ENCODE measurements at regions of chr15 and their contacts with region 1.

Region 1: DNA sequence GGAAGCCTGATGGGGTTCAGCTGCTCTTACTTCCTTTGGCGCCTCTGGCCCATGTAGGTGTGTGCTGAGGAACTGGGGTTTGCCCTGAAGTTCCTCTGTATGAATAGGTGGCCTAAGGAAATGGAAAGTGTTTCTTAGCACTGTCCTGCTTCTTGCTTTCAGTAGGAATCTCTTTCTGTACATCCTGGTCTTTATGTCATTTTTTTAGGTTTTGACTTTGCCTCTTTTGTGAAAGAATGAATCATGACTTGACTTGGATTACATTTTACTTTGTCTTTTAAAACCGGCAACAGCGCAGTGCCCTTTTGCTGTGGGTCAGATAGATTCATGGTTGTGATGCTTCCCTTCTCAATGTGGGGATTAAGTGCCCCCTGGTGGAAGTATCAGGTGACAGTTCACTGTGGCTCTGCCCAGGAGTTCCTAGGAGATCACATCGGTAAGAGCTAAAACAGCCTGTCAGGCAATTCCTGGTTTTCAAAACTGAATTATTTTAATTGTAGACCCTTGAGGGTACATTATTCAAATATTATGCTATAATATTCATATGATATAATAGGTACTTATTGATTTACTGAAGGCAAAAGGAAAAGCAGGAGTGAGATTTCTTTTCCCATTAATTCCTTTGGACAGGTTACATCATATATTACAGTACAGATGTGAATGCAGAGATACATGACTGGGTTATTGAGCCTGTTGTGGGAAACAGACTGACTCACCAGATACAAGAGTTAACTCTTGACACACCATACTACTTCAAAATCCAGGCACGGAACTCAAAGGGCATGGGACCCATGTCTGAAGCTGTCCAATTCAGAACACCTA is 95.4 kb downstream of the HCN4 start:
- DNase-seq: peak; percentile 67
- ATAC-seq: peak; percentile 95
- H3K4me3 ChIP-seq: no peak overlapping the region
- H3K27ac ChIP-seq: no peak overlapping the region
- H3K4me1 ChIP-seq: peaks cover 7% of the 10 kb centered on the region
- H3K27me3 ChIP-seq: no peaks in the 10 kb centered on the region
- CTCF ChIP-seq: peak; percentile 83
- POLR2A ChIP-seq: no peak
- RAD21 ChIP-seq: peak; percentile 76

Region 2: GRCh38 chr15:72722071-72722696 is 551.2 kb before region 1 on chr15:
- CTCF ChIA-PET with region 1: no interaction called
- POLR2A ChIA-PET with region 1: no interaction called
- dilution Hi-C with region 1: no loop called
- in situ Hi-C with region 1: no loop called
- intact Hi-C with region 1: loop called (anchors 1 kb)
- DNase-seq: peak; percentile 80
- ATAC-seq: peak; percentile 87
- H3K4me3 ChIP-seq: no peak overlapping the region
- H3K27ac ChIP-seq: no peak overlapping the region
- H3K4me1 ChIP-seq: no peaks in the 10 kb centered on the region
- H3K27me3 ChIP-seq: no peaks in the 10 kb centered on the region
- CTCF ChIP-seq: peak; percentile 87
- POLR2A ChIP-seq: no peak
- RAD21 ChIP-seq: peak; percentile 78

Region 3: GRCh38 chr15:72796515-72797337 is 476.7 kb before region 1 on chr15:
- CTCF ChIA-PET with region 1: interaction called, 6 read pairs
- POLR2A ChIA-PET with region 1: no interaction called
- dilution Hi-C with region 1: no loop called
- in situ Hi-C with region 1: no loop called
- intact Hi-C with region 1: loop called (anchors 1 kb)
- DNase-seq: peak; percentile 16
- ATAC-seq: peak; percentile 91
- H3K4me3 ChIP-seq: peak overlapping the region; percentile 53
- H3K27ac ChIP-seq: no peak overlapping the region; the same call in 1 of the 2 replicates
- H3K4me1 ChIP-seq: peaks cover 12% of the 10 kb centered on the region
- H3K27me3 ChIP-seq: no peaks in the 10 kb centered on the region; the same call in 1 of the 2 replicates
- CTCF ChIP-seq: peak; percentile 73
- POLR2A ChIP-seq: no peak
- RAD21 ChIP-seq: peak; percentile 84

Region 4: GRCh38 chr15:73127301-73127936 is 146.0 kb before region 1 on chr15:
- CTCF ChIA-PET with region 1: no interaction called
- POLR2A ChIA-PET with region 1: no interaction called
- dilution Hi-C with region 1: no loop called
- in situ Hi-C with region 1: loop called (anchors 10 kb)
- intact Hi-C with region 1: loop called (anchors 5 kb)
- DNase-seq: peak; percentile 30
- ATAC-seq: peak; percentile 89
- H3K4me3 ChIP-seq: no peak overlapping the region
- H3K27ac ChIP-seq: no peak overlapping the region
- H3K4me1 ChIP-seq: no peaks in the 10 kb centered on the region
- H3K27me3 ChIP-seq: no peaks in the 10 kb centered on the region
- CTCF ChIP-seq: peak; percentile 67
- POLR2A ChIP-seq: no peak
- RAD21 ChIP-seq: peak; percentile 43

Region 5: DNA sequence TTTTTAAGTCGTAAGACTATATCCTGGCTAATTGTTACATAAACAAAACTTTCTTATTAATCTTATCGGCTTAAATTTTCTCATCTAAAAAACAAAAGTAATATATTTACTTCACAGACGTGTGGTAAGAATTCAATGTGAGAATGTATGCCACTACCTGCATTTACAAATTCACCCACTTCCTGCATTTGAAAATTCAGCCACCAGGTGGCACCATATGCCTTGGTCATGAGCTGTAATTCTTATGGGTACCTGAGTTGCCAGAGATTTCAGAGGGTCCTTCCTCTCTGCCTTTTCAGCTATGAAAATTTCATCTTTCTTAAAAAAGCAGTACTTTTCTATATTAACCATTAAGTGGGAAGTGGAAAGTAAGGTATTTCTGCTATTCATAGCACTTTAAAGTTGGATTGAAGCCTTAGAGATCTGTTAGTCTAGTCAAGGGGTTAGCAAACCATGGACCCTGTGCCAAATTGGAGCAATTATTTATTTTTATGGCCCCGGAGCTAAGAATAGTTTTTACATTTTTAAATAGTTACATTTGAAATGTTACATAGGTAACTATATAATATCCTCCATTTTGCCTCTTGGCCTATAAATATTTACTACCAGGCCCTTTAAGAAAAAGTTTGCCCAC is 32.4 kb before region 1 on chr15:
- CTCF ChIA-PET with region 1: interaction called, 5 read pairs
- POLR2A ChIA-PET with region 1: no interaction called
- dilution Hi-C with region 1: no loop called
- in situ Hi-C with region 1: no loop called
- intact Hi-C with region 1: loop called (anchors 1 kb)
- DNase-seq: peak; percentile 67
- ATAC-seq: peak; percentile 61
- H3K4me3 ChIP-seq: no peak overlapping the region
- H3K27ac ChIP-seq: no peak overlapping the region
- H3K4me1 ChIP-seq: peaks cover 3% of the 10 kb centered on the region
- H3K27me3 ChIP-seq: no peaks in the 10 kb centered on the region
- CTCF ChIP-seq: peak; percentile 82
- POLR2A ChIP-seq: no peak
- RAD21 ChIP-seq: peak; percentile 76

Measured in IMR-90 (cell line).